Activated CD4-positive, alpha-beta memory T cell treated with anti-CD3 and anti-CD28 coated beads for 36 hours (primary cell): ENCODE measurements at regions of chr14 and their contacts with region 1.

Region 1: GRCh38 chr14:82710267-82710841 is 1176.7 kb upstream of the SEL1L start:
- DNase-seq: peak; percentile 48
- H3K4me3 Mint-ChIP-seq: no peak overlapping the region
- H3K27ac Mint-ChIP-seq: no peak overlapping the region
- H3K4me1 Mint-ChIP-seq: no peaks in the 10 kb centered on the region
- H3K27me3 Mint-ChIP-seq: no peaks in the 10 kb centered on the region

Region 2: DNA sequence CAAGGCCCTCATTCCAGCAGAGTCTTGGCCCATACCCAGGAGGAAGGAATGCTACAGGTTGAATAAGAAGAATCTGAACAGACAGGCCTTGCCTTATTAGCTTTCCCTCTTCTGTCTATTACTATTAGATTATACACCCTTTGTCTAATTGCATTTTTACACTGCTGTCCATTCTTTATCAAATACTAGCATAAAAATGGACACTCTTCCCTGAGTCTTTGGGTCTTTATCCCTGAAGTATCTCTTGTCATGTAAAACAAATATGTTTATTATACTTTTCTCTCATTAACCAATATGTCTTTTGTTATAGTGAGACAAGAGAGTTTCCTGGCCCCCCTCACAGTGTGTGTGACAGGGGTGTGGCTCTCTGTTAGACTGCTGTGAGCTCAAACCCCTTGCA is 279.3 kb before region 1 on chr14:
- CTCF ChIA-PET with region 1: no interaction called
- POLR2A ChIA-PET with region 1: no interaction called
- intact Hi-C with region 1: no loop called
- DNase-seq: no peak
- H3K4me3 Mint-ChIP-seq: no peak overlapping the region
- H3K27ac Mint-ChIP-seq: no peak overlapping the region
- H3K4me1 Mint-ChIP-seq: no peaks in the 10 kb centered on the region
- H3K27me3 Mint-ChIP-seq: no peaks in the 10 kb centered on the region

Region 3: DNA sequence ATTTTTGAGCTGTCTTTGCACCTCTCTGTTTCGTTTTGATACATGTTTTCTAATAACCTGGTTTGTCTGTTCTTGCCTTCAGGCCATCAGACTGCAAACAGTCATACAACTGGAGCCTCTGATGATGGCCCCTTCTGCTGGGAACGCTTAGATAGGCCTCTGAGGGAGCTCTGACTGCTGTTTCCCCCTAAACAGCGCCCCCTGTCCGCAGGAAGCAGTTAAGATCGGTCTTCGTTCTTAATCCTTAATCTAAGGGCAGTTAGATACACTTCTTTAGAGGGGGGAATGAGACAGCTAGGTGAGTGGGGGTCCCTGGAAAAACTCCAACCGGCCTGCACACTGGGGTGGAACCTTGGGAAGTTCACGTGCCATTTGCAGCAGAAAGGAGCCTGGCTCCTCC is 162.1 kb after region 1 on chr14:
- CTCF ChIA-PET with region 1: no interaction called
- POLR2A ChIA-PET with region 1: no interaction called
- intact Hi-C with region 1: no loop called
- DNase-seq: no peak
- H3K4me3 Mint-ChIP-seq: no peak overlapping the region
- H3K27ac Mint-ChIP-seq: no peak overlapping the region
- H3K4me1 Mint-ChIP-seq: no peaks in the 10 kb centered on the region
- H3K27me3 Mint-ChIP-seq: no peaks in the 10 kb centered on the region

Region 4: DNA sequence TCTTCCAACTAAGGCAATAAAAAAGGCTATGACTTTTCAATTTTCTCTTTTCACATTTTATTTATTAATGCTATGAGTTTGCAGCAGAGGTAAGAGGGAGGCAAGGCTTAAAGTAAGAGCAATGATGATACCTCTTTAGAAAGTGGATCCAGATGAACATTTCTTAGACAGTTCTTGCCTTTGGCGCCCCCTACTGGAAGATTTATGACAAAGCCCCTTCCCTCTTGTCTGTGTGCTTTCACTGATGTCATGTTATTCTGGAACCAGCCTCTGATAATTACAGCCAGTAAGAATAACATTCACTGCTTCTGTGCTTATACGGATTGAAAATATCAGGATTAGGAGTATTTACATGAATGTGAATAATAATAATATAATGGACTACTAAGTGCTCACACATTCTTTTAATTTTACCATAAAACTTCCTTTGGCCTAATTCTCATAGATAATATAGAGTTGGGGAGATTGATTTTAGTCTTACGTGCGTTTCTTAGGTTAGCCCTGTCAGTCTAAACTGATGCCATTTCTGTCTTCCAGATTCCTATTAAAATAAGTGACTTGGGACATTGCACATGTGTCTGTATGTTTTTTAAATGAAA is 753.2 kb after region 1 on chr14:
- CTCF ChIA-PET with region 1: no interaction called
- POLR2A ChIA-PET with region 1: no interaction called
- intact Hi-C with region 1: loop called (anchors 5 kb)
- DNase-seq: no peak
- H3K4me3 Mint-ChIP-seq: no peak overlapping the region
- H3K27ac Mint-ChIP-seq: no peak overlapping the region
- H3K4me1 Mint-ChIP-seq: no peaks in the 10 kb centered on the region
- H3K27me3 Mint-ChIP-seq: no peaks in the 10 kb centered on the region